ENCODE measurements at regions of chr2 and their contacts with region 1.

Region 1: GRCh38 chr2:54704688-54705605 is 18.5 kb upstream of the EML6 start:
- DNase-seq: no peak
- H3K4me3 ChIP-seq: no peak overlapping the region
- H3K27ac ChIP-seq: no peak overlapping the region
- H3K27me3 ChIP-seq: peaks cover 19% of the 10 kb centered on the region
- CTCF ChIP-seq: peak; percentile 63

Region 2: DNA sequence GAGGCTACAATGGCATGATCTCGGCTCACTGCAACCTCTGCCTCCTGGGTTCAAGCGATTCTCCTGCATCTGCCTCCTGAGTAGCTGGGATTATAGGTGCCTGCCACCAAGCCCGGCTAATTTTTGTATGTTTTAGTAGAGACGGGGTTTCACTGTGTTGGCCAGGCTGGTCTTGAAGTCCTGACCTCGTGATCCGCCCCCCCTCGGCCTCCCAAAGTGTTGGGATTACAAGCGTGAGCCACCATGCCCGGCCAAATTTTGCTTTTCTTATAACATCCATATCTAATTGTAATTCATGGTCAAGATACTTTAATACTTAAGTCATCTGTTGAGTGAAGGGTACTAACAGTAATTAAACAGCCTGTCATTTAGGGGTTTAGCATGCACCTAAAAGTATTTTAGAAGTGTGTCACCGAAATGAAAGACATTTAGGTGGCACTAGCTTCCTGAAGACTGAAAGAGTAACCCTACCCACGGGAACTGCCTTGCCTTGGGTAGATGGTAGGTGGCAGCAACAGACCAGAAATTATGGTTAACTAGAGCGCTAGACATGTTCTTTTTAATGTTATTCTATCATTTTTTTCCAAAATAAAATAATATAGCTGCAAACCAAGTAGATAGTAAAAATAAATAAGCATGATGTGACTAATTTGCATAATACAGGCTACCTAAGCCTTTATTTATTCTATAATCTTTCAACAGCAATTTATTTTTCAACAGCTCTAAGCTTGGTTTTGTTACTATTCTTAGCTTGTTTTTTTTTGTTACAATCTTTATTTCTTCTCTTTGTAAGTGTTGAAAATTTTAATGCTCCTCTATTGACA is 598.1 kb before region 1 on chr2:
- CTCF ChIA-PET with region 1: interaction called, 113 read pairs
- POLR2A ChIA-PET with region 1: no interaction called
- DNase-seq: no peak
- H3K4me3 ChIP-seq: no peak overlapping the region
- H3K27ac ChIP-seq: no peak overlapping the region
- H3K27me3 ChIP-seq: no peaks in the 10 kb centered on the region
- CTCF ChIP-seq: peak; percentile 81

Region 3: DNA sequence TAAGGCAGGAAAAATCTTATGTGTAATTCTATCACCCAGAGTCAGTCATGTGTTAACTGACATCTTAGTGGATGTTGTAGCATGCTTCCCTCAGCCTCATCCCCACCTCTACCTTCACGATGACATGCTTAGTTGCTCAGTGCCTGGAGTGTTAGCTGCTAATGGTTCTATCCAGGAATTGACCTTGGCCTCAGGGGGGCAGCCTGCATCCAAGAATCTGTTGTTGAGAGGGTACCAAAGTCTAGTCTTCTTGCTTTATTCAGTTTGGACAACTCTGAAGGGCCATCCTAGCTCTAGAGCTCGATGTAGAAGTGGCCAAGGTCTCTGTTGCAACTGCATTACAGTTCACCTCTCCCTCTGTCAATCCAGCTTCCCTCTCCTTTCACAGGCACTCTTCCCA is 528.4 kb before region 1 on chr2:
- CTCF ChIA-PET with region 1: interaction called, 28 read pairs
- POLR2A ChIA-PET with region 1: no interaction called
- DNase-seq: peak; percentile 21
- H3K4me3 ChIP-seq: no peak overlapping the region
- H3K27ac ChIP-seq: no peak overlapping the region
- H3K27me3 ChIP-seq: no peaks in the 10 kb centered on the region
- CTCF ChIP-seq: peak; percentile 64

Region 4: DNA sequence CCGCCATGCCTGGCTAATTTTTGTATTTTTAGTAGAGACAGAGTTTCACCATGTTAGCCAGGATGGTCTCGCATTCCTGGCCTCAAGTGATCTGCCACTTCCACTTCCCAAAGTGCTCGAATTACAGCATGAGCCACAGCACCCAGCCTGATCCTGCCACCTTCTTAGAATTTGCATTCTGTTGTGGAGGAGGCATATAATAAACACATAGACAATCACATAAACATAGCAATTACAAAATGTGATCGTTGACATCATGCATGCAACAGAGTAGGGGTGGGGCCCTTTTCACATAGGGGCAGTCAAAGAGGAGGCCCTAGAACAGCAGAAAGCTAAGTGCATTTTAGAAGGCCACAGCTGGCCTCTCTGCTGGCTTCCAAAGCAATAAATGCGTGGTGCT is 409.0 kb before region 1 on chr2:
- CTCF ChIA-PET with region 1: no interaction called
- POLR2A ChIA-PET with region 1: no interaction called
- DNase-seq: no peak
- H3K4me3 ChIP-seq: no peak overlapping the region
- H3K27ac ChIP-seq: no peak overlapping the region
- H3K27me3 ChIP-seq: no peaks in the 10 kb centered on the region
- CTCF ChIP-seq: no peak

Region 5: DNA sequence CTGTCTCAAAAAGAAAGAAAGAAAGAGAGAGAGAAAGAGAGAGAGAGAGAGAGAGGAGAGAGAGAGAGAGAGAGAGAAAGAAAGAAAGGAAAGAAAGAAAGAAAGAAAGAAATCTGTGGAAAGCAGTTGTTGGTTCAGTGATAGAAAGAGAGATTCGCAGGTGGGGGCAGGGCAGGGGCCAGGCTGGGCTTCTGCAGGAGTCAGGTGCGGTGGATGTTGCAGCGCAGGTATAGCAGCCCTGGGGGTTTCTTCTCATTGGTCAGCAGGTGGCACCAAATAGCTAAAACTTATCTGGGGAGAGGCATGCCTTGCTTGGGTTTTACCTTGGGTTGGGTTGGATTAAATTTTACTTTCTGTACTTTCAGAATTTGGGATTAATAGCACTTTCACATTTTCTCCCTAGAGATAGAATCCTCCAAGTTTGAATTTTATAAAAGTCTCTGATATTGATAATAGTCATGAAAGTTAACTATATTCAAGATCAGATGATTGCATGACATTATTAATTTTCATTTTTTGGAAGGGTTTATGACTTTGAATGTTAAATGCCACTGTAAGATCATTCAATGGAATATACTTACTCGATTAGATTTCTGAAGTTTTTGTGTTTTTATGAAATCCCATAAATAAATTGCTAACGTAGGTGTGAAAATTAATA is 182.2 kb before region 1 on chr2:
- CTCF ChIA-PET with region 1: interaction called, 66 read pairs
- POLR2A ChIA-PET with region 1: no interaction called
- DNase-seq: no peak
- H3K4me3 ChIP-seq: no peak overlapping the region
- H3K27ac ChIP-seq: no peak overlapping the region
- H3K27me3 ChIP-seq: no peaks in the 10 kb centered on the region
- CTCF ChIP-seq: peak; percentile 65

Region 6: DNA sequence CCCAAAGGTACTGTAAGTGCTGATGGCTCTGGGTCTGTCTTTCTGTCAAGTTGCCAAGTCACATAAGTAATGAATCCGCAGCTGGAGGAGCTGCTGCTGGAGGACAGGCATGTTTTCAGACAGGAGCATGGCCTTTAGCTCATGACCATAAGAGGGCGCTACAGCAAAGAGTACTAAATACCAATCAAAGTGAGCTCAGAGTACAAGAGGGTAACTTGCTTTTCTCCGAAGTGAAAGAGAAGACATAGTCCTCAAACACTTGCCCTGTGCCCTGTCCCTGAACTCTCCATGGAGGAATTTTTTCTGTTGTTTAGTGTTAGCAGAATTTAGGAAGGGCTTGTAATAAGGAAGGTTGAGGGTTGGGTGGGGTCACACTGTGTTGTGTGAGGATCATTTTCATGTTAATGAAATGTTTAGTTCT is 39.5 kb before region 1 on chr2:
- CTCF ChIA-PET with region 1: interaction called, 27 read pairs
- POLR2A ChIA-PET with region 1: interaction called, 3 read pairs
- DNase-seq: no peak
- H3K4me3 ChIP-seq: no peak overlapping the region
- H3K27ac ChIP-seq: no peak overlapping the region
- H3K27me3 ChIP-seq: no peaks in the 10 kb centered on the region
- CTCF ChIP-seq: peak; percentile 55; the same call in 1 of the 2 replicates

Region 7: DNA sequence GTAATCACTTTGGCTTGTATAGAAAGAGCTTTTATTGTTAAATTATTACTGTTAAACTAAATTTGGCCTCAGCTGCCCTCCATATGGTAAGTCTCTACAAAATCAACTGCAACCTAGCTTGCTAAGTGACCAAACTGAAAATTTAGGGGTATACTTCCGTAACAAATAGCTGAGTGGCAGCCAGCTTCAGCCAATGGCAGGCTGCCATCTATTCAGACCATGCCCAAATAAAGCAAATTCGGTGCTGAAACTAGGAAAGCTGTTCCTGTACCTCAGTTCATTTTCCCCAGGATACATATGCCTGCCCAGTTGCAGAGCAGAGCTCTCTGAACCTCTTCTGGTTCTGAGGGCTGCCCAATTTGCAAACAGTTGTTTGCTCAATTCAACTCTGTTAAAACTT is 113.3 kb after region 1 on chr2:
- CTCF ChIA-PET with region 1: no interaction called
- POLR2A ChIA-PET with region 1: no interaction called
- DNase-seq: no peak
- H3K4me3 ChIP-seq: no peak overlapping the region
- H3K27ac ChIP-seq: no peak overlapping the region
- H3K27me3 ChIP-seq: peaks cover 20% of the 10 kb centered on the region
- CTCF ChIP-seq: no peak

Measured in AG04450 (cell line).